ENCODE measurements at regions of chr4 and their contacts with region 1.

Region 1: GRCh38 chr4:173013232-173013930 is 155.2 kb upstream of the GALNT7 start:
- ATAC-seq: peak; percentile 17 to 66 (median 42)
- H3K4me3 ChIP-seq: no peak overlapping the region
- H3K27ac ChIP-seq: no peak overlapping the region
- H3K4me1 ChIP-seq: peaks cover 4 to 14% of the 10 kb centered on the region in 2 donors

Region 2: DNA sequence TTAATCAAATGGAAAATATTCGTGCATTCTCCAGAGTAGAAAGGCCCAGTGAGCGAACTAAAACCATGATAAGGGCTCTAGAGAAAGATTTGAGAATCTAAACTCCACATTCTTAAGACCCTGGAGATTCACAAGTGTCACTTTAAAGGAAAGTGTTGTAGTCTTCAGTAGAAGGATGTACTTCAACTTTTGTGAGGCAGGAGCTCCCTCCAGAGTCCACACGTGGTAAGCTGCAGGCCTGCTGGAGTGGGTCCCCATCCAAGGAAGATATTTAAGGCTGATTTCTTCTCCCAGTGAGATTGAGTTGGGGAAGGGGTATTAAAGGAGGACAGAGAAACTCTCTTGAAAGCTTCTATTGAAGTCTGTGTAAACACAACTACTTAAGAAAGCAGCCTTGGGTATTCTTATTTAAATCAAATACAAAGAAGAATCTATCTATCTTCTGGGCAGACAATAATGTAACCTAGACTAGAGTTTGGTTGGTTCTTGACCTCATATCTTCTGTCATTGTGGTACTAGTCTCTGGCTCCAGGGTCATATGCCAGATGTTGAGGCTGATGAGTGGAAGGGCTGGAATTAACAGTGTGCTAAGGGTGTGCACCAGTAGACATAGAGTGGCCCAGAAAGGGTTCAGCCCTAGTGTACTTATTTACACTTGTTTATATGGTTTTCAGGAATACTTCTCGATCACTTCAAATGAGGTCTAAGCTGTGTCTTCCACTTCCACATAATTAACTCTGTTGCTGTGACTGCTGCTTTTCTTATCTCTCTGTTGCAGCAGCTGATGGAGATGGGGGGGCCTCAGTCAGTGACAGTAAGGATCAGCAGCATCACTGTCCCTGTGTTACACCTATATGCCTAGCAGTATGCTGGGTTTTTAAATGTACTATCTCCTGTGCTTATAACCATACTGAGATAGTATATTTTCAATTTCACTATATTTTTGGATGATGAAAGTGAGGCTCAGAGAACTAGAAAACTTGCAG is 244.6 kb after region 1 on chr4:
- in situ Hi-C with region 1: loop called in 5 of 9 experiments (anchors 10 to 25 kb)
- ATAC-seq: peak; percentile 71 to 100 (median 94)
- H3K4me3 ChIP-seq: no peak overlapping the region
- H3K27ac ChIP-seq: no peak overlapping the region
- H3K4me1 ChIP-seq: peaks cover 4 to 6% of the 10 kb centered on the region in 2 donors

Region 3: DNA sequence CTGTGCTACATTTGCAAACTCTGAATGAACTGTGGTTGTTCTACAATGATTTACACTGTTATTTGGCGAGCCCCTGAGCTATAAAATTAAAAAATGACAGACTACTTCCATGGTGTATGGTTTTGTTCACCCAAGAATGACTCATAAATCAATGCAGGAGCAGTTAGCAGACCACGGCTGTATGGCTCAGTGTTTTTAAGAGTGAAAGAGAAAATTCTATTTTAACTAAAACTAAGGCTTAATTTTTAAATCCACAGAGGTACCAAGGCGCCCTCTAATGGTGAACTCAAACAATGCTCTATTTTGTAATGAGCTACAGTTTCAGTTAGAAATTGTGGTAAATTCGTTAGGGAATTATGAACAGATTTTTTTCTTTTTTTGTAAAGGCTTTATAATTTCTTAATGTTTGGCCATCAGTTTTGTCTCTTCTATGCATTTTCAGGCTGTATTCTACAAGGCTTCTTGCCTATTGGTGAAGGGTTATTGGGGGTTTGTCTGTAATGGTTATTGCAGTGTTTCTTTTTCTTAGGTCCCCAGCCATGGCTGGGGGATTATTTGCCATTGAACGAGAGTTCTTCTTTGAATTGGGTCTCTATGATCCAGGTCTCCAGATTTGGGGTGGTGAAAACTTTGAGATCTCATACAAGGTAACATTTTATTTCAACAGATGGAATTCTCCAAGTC is 288.3 kb after region 1 on chr4:
- in situ Hi-C with region 1: loop called in 1 of 9 experiments (anchors 25 kb)
- ATAC-seq: peak in 7 of 8 experiments; percentile 14 to 100 (median 99)
- H3K4me3 ChIP-seq: no peak overlapping the region
- H3K27ac ChIP-seq: no peak overlapping the region
- H3K4me1 ChIP-seq: peaks cover 0 to 23% of the 10 kb centered on the region in 2 donors

Region 4: DNA sequence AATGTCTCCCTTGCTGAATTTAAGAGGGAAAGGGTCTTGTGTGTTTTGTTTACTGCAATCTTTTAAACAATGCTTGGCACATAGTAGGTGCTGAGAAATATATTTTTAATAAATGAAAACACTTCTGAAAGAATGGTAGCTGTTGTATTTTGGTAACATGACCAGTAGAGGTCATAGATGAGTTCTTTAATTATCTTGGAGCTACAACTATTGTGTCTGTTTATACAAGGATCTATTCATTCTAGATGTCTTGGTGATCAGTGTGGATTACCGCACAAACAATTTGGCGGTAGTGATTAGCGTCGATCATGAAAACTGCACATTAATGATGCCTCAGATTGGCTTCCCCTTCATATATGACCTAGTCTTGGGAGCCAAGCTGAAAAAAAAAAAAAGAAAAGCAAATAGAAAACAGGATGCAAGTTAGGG is 407.0 kb after region 1 on chr4:
- in situ Hi-C with region 1: loop called in 6 of 9 experiments (anchors 25 kb)
- ATAC-seq: peak in 4 of 8 experiments; percentile 41 to 65 (median 50)
- H3K4me3 ChIP-seq: no peak overlapping the region
- H3K27ac ChIP-seq: no peak overlapping the region
- H3K4me1 ChIP-seq: no peaks in the 10 kb centered on the region

Region 5: GRCh38 chr4:174156239-174156826 is 1143.0 kb after region 1 on chr4:
- in situ Hi-C with region 1: loop called in 1 of 9 experiments (anchors 25 kb)
- ATAC-seq: peak; percentile 46 to 81 (median 56)
- H3K4me3 ChIP-seq: no peak overlapping the region
- H3K27ac ChIP-seq: no peak overlapping the region
- H3K4me1 ChIP-seq: peaks cover 0 to 4% of the 10 kb centered on the region in 2 donors

Measured in motor neuron (in vitro differentiated cells).